ENCODE measurements at regions of chr1 and their contacts with region 1.

Region 1: DNA sequence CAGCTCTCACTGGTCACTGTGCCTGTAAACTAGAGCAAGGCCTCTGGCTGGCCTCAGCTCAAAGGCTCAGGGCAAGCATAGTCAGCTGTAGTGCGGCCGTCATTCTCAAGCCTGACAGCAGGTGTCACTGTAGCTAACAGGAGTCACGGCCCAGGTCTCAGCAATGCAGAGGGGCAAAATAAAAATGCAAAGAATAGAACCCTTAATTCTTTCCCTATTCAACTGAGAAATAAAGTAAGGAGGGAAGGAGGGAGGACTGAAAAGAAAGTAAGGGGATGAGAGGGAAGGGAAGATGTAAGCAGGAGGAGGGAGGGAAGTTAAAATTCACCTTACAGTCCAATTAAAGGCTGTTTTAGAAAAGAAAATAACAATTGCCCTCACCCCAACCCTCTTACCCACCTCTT is 106.1 kb downstream of the KIAA0319L start:
- DNase-seq: peak; percentile 51
- H3K4me3 ChIP-seq: no peak overlapping the region
- H3K27ac ChIP-seq: peak overlapping the region; percentile 87
- H3K27me3 ChIP-seq: no peaks in the 10 kb centered on the region
- CTCF ChIP-seq: peak; percentile 89

Region 2: GRCh38 chr1:35259561-35259960 is 191.6 kb before region 1 on chr1:
- CTCF ChIA-PET with region 1: no interaction called
- POLR2A ChIA-PET with region 1: no interaction called
- DNase-seq: no peak
- H3K4me3 ChIP-seq: no peak overlapping the region
- H3K27ac ChIP-seq: no peak overlapping the region
- H3K27me3 ChIP-seq: no peaks in the 10 kb centered on the region
- CTCF ChIP-seq: no peak

Region 3: GRCh38 chr1:35475856-35476674 is 24.9 kb after region 1 on chr1:
- CTCF ChIA-PET with region 1: interaction called, 11 read pairs
- POLR2A ChIA-PET with region 1: no interaction called
- DNase-seq: no peak
- H3K4me3 ChIP-seq: no peak overlapping the region
- H3K27ac ChIP-seq: no peak overlapping the region
- H3K27me3 ChIP-seq: no peaks in the 10 kb centered on the region
- CTCF ChIP-seq: no peak

Region 4: DNA sequence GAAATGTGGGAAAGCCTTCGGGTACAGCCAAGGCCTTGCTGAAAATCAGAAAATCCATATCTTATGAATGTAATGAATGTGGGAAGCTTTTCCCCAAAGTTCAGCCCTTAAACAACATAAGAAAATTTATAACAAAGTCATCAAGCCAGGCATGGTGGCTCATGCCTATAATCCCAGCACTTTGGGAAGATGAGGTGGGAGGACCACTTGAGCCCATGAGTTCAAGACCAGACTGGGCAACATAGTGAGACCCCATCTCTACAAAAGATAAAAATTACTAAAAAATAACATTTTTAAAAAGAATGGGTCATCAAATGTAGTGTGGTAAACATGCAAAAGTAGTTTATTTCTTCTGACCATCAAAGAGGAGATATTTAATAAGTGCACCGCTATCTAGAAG is 60.2 kb after region 1 on chr1:
- CTCF ChIA-PET with region 1: no interaction called
- POLR2A ChIA-PET with region 1: no interaction called
- DNase-seq: no peak
- H3K4me3 ChIP-seq: no peak overlapping the region
- H3K27ac ChIP-seq: no peak overlapping the region
- H3K27me3 ChIP-seq: no peaks in the 10 kb centered on the region
- CTCF ChIP-seq: no peak

Region 5: GRCh38 chr1:35544978-35545377 is 93.9 kb after region 1 on chr1:
- CTCF ChIA-PET with region 1: interaction called, 24 read pairs
- POLR2A ChIA-PET with region 1: no interaction called
- DNase-seq: no peak
- H3K4me3 ChIP-seq: no peak overlapping the region
- H3K27ac ChIP-seq: no peak overlapping the region
- H3K27me3 ChIP-seq: no peaks in the 10 kb centered on the region
- CTCF ChIP-seq: peak; percentile 16; the same call in 1 of the 2 replicates

Region 6: GRCh38 chr1:35564037-35564883 is 113.1 kb after region 1 on chr1:
- CTCF ChIA-PET with region 1: interaction called, 220 read pairs
- POLR2A ChIA-PET with region 1: interaction called, 8 read pairs
- DNase-seq: no peak
- H3K4me3 ChIP-seq: no peak overlapping the region
- H3K27ac ChIP-seq: peak overlapping the region; percentile 11
- H3K27me3 ChIP-seq: no peaks in the 10 kb centered on the region
- CTCF ChIP-seq: peak; percentile 83